ENCODE measurements at regions of chr10 and their contacts with region 1.

Region 1: DNA sequence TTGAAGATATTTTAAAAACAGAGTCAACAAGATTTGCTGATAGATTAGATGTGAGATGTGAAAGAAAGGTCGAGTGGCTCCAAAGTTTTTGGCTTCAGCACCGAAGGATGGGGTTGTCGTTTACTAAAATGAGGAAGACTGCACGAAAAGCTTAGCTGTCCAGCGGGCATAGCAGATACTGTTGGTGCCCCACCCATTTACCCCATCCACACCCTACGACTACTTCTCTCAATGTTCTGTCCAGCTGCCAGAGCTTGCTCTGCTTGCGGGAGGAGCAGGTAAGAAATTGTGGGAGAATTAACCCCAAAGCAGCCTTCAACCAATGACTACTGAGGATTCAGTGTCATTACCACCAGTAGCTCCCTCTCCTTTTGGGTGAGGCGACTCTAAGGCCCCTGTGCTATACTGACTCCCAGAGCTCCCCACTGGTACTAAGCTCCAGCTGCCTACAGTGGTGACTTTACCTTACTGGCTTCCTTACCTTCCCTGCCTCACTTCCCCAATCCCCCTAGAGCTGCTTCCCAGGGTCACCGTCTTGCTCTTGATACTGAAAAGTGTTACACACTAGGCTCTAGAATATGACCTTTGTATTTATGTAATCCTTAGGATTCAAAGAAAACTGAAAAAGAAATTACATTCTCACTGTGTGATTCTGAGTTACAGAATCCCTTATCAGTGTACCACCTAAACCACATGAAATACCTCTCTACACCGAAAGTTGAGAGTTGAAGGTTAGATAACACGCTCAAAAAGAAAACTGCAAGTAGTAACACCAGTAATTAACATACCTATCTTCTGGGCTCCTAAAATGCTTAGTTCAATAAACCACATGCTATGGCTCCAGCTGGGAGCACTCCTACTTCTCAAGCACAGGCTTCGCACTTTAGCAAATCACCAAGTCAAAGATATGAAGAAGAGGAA is 22.3 kb downstream of the CACUL1 start:
- DNase-seq: no peak
- H3K4me3 ChIP-seq: no peak overlapping the region
- H3K27ac ChIP-seq: no peak overlapping the region
- H3K27me3 ChIP-seq: no peaks in the 10 kb centered on the region
- CTCF ChIP-seq: no peak

Region 2: DNA sequence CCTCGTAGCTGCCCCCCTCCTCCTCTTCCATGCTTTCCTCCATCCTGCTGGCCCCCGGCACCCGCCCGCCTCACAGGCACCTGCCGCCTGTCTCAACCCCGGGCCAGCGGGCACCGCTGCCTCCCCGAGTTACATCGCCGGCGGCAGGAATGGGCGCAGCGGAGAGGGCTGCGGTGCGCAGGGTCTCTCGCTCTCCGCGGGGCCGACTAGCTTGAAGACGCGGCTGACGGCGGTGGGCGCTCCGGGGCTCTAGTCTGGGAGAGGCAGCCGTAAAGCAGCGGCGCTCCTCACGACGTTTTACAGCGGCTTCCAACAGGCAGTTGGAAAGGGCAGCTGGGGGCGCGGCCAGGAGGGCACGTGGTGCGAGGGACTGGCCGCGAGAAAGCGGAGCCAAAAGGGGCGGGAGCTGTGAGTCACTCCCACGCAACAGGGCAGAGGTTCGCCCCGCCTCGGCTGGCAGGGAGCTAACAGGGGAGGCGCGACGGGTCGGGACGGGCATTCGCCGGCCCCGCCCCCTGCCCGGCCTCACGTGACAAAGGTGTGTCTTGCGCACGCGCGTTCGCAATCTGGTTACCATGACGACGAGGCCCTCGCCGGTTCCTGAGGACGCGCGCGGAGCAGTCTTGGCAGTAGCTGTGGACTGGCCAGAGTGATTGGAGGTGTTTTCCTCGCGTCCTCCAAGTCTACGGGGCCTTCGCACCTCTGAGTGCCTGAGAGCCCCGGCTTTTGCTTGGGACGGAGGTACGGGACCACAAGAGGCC is 22.4 kb after region 1 on chr10 and contains the start of gene CACUL1:
- CTCF ChIA-PET with region 1: interaction called, 12 read pairs
- POLR2A ChIA-PET with region 1: interaction called, 3 read pairs
- DNase-seq: peak; percentile 100
- H3K4me3 ChIP-seq: peak within 1 kb of the TSS; percentile 95
- H3K27ac ChIP-seq: peak within 1 kb of the TSS; percentile 81
- H3K27me3 ChIP-seq: no peaks in the 10 kb centered on the region
- CTCF ChIP-seq: no peak
- polyA plus RNA-seq, gene CACUL1: 12.4 and 15.3 TPM in 2 replicates